K562 (cell line): ENCODE measurements at regions of chr7 and their contacts with region 1.

Region 1: DNA sequence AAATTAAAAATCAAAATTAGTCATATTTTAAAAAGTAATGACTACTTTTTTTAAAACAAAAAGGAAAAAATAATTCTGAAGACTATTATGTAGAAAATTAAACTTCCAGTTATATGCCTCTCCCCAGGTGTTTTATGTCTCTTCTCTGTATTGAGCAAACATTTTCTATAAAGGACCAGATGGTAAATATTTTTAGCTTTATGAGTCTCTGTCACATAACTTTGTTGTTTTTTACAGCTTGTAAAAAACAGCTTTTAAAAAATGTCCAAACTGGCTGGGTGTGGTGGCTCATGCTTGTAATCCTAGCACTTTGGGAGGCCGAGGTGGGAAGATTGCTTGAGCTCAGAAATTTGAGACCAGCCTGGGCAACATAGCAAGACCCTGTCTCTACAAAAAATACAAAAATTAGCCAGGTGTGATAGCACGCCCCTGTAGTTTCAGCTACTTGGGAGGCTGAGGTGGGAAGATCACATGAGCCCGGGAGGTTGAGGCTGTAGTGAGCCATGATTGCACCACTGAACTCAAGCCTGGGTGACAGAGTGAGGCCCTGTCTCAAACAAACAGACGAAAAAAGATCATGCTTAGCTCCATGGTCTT is 23.5 kb downstream of the GARS1 start:
- DNase-seq: no peak
- ATAC-seq: no peak
- H3K4me3 ChIP-seq: no peak overlapping the region
- H3K27ac ChIP-seq: no peak overlapping the region
- H3K4me1 ChIP-seq: no peaks in the 10 kb centered on the region
- H3K27me3 ChIP-seq: no peaks in the 10 kb centered on the region
- CTCF ChIP-seq: no peak
- EP300 ChIP-seq: no peak
- POLR2A ChIP-seq: no peak
- RAD21 ChIP-seq: no peak

Region 2: DNA sequence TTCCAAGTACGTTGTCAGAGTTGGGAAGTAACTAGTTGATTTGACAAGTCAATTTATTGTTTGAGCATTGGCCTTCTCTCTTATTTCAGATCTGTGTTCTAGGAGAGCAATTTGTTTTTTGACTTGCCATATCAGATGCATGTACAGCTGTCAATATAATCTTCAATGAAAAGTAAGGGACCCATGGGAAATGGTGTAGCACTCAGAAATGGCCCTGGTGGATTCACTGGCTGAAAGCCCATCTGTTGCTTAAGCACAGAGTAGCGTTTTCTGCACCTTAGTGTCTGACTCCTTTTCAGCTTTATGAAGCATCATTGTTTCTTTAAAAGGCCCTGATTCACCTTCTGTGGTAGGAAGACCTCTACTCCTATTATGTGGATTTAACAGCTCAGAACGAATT is 13.3 kb before region 1 on chr7:
- CTCF ChIA-PET with region 1: no interaction called
- POLR2A ChIA-PET with region 1: interaction called, 19 read pairs
- in situ Hi-C with region 1: no loop called
- intact Hi-C with region 1: loop called (anchors 2 kb)
- DNase-seq: no peak
- ATAC-seq: peak; percentile 13; the same call in 1 of the 3 replicates
- H3K4me3 ChIP-seq: no peak overlapping the region
- H3K27ac ChIP-seq: no peak overlapping the region
- H3K4me1 ChIP-seq: no peaks in the 10 kb centered on the region
- H3K27me3 ChIP-seq: no peaks in the 10 kb centered on the region
- CTCF ChIP-seq: no peak
- EP300 ChIP-seq: no peak
- POLR2A ChIP-seq: no peak
- RAD21 ChIP-seq: no peak

Region 3: GRCh38 chr7:30630986-30631385 is 12.8 kb after region 1 on chr7:
- CTCF ChIA-PET with region 1: no interaction called
- POLR2A ChIA-PET with region 1: interaction called, 35 read pairs
- in situ Hi-C with region 1: no loop called
- intact Hi-C with region 1: no loop called
- DNase-seq: no peak
- ATAC-seq: no peak
- H3K4me3 ChIP-seq: no peak overlapping the region
- H3K27ac ChIP-seq: no peak overlapping the region
- H3K4me1 ChIP-seq: no peaks in the 10 kb centered on the region
- H3K27me3 ChIP-seq: no peaks in the 10 kb centered on the region
- CTCF ChIP-seq: no peak
- EP300 ChIP-seq: no peak
- POLR2A ChIP-seq: no peak
- RAD21 ChIP-seq: no peak

Region 4: DNA sequence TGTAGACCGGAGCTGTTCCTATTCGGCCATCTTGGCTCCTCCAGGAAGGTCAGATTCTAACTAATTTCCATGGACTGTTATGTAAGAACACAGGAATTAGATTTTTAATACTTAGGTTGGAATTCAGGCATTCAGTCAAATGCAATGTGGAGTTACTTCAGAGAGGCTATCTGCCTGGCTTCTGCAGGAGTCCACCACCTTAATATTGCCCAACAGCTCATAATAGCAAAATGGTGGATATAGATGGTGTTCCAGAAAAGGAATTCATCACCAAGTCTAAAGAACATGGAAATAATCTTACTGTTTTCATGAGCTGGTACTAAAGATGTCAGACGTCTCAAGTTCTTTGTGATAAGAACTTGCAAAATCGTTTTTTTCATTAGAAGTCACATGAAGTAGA is 24.6 kb after region 1 on chr7:
- CTCF ChIA-PET with region 1: no interaction called
- POLR2A ChIA-PET with region 1: no interaction called
- in situ Hi-C with region 1: no loop called
- intact Hi-C with region 1: no loop called
- DNase-seq: no peak
- ATAC-seq: peak; percentile 11; the same call in 2 of the 3 replicates
- H3K4me3 ChIP-seq: no peak overlapping the region
- H3K27ac ChIP-seq: no peak overlapping the region
- H3K4me1 ChIP-seq: no peaks in the 10 kb centered on the region; a peak in 1 of 5 replicates
- H3K27me3 ChIP-seq: no peaks in the 10 kb centered on the region
- CTCF ChIP-seq: no peak
- EP300 ChIP-seq: no peak
- POLR2A ChIP-seq: no peak
- RAD21 ChIP-seq: no peak